PC-9 (cell line): ENCODE measurements at regions of chr10 and their contacts with region 1.

Region 1: GRCh38 chr10:68720793-68721672 is at the start of gene CCAR1:
- DNase-seq: peak; percentile 96 to 97
- H3K4me3 ChIP-seq: peak within 1 kb of the TSS; percentile 85
- H3K27ac ChIP-seq: peak within 1 kb of the TSS; percentile 87
- H3K4me1 ChIP-seq: peaks cover 10% of the 10 kb centered on the region
- H3K27me3 ChIP-seq: no peaks in the 10 kb centered on the region
- CTCF ChIP-seq: no peak
- total RNA-seq, gene CCAR1: 66.1 and 98.3 TPM in 2 replicates

Region 2: DNA sequence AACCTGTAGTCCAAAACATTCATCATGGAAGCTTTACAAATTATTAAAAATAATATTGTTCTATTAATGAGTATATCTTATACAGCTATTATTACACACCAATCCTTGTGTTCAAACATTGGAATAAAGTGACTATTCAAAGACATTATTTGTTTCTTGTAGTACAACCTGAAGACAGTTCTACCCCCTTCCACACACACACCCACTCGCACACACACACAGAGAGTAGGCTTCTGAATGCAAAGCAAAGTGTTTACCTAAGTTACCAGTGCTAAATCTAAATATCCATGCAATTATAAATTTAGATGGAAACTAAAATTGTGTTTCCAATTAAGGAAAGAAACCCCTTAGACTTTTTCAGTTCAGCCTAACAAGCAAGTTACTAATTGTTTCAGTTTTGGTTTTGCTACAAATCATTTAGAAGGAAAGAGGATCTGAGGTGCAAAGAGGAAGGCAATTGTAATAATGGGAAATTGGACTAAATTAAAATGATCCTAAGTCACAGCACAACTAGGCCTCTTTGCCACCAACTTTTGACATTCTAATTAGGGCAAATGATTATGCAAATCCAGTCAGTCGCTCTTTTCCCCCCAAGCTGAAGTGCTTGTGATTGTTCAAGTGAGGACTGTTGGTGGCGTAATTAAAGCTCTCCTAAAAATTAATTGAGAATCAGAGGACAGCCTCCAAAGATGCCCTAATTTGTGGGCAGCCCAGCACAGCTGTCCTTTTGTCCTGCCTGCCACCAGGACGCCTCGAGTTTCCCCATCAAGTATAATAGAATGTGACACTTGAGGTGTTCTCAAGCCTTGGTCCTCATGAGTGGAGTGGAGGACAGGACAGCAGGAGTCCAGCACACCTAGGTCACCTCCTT is 469.2 kb before region 1 on chr10:
- CTCF ChIA-PET with region 1: no interaction called
- POLR2A ChIA-PET with region 1: no interaction called
- intact Hi-C with region 1: no loop called
- DNase-seq: no peak
- H3K4me3 ChIP-seq: no peak overlapping the region
- H3K27ac ChIP-seq: no peak overlapping the region
- H3K4me1 ChIP-seq: no peaks in the 10 kb centered on the region
- H3K27me3 ChIP-seq: no peaks in the 10 kb centered on the region
- CTCF ChIP-seq: no peak

Region 3: GRCh38 chr10:68471586-68472408 is 249.2 kb before region 1 on chr10 and contains the start of gene DNA2:
- CTCF ChIA-PET with region 1: no interaction called
- POLR2A ChIA-PET with region 1: no interaction called
- intact Hi-C with region 1: loop called (anchors 1 kb)
- DNase-seq: peak; percentile 56 to 82
- H3K4me3 ChIP-seq: peak within 1 kb of the TSS; percentile 67
- H3K27ac ChIP-seq: peak within 1 kb of the TSS; percentile 53
- H3K4me1 ChIP-seq: peaks cover 15% of the 10 kb centered on the region
- H3K27me3 ChIP-seq: no peaks in the 10 kb centered on the region
- CTCF ChIP-seq: no peak
- total RNA-seq, gene DNA2: 27.5 and 33.4 TPM in 2 replicates

Region 4: DNA sequence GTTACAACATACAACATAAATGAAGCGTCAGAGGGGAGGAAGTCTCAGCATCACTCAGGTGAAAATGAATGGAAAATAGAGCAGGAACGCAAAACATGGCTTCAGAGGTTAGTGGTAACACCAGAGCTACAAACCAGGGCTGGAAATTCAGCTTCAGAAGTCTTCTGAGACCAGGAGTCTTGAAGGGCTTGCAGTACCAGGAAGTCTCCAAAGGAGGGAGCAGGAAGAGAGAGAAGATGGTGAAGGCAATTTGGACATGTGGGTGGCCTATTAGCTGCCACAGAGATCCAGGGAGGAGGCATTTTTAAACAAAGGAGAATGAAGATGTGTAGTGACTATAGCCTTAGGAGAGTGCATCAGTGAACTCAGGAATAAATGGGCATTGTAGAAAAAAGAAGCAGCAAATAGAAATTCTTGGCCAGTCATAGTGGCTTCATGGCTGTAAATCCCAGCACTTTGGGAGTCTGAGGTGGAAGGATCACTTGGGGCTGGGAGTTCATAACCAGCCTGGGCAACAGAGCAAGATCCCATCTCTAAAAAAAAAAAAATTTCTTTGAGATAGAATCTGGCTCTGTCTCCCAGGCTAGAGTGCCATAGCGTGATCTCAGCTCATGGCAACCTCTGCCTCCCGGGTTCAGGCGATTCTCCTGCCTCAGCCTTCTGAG is 170.2 kb before region 1 on chr10:
- CTCF ChIA-PET with region 1: no interaction called
- POLR2A ChIA-PET with region 1: interaction called, 14 read pairs
- intact Hi-C with region 1: loop called (anchors 2 kb)
- DNase-seq: peak in 1 of 2 experiments; percentile 49
- H3K4me3 ChIP-seq: no peak overlapping the region
- H3K27ac ChIP-seq: no peak overlapping the region
- H3K4me1 ChIP-seq: peaks cover 18% of the 10 kb centered on the region
- H3K27me3 ChIP-seq: no peaks in the 10 kb centered on the region
- CTCF ChIP-seq: peak; percentile 79

Region 5: DNA sequence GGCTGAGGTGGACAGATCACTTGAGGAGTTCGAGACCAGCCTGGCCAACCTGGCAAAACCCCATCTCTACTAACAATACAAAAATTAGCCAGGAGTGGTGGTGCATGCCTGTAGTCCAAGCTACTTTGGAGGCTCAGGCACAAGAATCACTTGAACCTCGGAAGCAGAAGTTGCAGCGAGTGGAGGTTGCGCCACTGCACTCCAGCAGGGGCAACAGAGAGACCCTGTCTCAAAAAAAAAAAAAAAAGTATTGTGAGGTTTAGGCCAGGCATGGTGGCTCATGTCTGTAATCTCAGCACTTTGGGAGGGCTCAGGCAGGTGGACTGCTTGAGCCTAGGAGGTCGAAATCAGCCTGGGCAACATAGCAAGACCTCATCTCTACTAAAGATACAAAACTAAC is 144.9 kb before region 1 on chr10:
- CTCF ChIA-PET with region 1: no interaction called
- POLR2A ChIA-PET with region 1: no interaction called
- intact Hi-C with region 1: no loop called
- DNase-seq: no peak
- H3K4me3 ChIP-seq: no peak overlapping the region
- H3K27ac ChIP-seq: no peak overlapping the region
- H3K4me1 ChIP-seq: no peaks in the 10 kb centered on the region
- H3K27me3 ChIP-seq: no peaks in the 10 kb centered on the region
- CTCF ChIP-seq: no peak

Region 6: GRCh38 chr10:68594405-68594804 is 126.6 kb before region 1 on chr10:
- CTCF ChIA-PET with region 1: no interaction called
- POLR2A ChIA-PET with region 1: interaction called, 10 read pairs
- intact Hi-C with region 1: no loop called
- DNase-seq: peak; percentile 55 to 70
- H3K4me3 ChIP-seq: no peak overlapping the region
- H3K27ac ChIP-seq: peak overlapping the region; percentile 35
- H3K4me1 ChIP-seq: peaks cover 11% of the 10 kb centered on the region; the same call in 1 of the 2 replicates
- H3K27me3 ChIP-seq: no peaks in the 10 kb centered on the region
- CTCF ChIP-seq: no peak

Region 7: GRCh38 chr10:69101451-69102095 is 380.5 kb after region 1 on chr10:
- CTCF ChIA-PET with region 1: no interaction called
- POLR2A ChIA-PET with region 1: no interaction called
- intact Hi-C with region 1: no loop called
- DNase-seq: no peak
- H3K4me3 ChIP-seq: no peak overlapping the region
- H3K27ac ChIP-seq: no peak overlapping the region
- H3K4me1 ChIP-seq: no peaks in the 10 kb centered on the region
- H3K27me3 ChIP-seq: no peaks in the 10 kb centered on the region
- CTCF ChIP-seq: no peak